ENCODE measurements at regions of chr21 and their contacts with region 1.

Region 1: DNA sequence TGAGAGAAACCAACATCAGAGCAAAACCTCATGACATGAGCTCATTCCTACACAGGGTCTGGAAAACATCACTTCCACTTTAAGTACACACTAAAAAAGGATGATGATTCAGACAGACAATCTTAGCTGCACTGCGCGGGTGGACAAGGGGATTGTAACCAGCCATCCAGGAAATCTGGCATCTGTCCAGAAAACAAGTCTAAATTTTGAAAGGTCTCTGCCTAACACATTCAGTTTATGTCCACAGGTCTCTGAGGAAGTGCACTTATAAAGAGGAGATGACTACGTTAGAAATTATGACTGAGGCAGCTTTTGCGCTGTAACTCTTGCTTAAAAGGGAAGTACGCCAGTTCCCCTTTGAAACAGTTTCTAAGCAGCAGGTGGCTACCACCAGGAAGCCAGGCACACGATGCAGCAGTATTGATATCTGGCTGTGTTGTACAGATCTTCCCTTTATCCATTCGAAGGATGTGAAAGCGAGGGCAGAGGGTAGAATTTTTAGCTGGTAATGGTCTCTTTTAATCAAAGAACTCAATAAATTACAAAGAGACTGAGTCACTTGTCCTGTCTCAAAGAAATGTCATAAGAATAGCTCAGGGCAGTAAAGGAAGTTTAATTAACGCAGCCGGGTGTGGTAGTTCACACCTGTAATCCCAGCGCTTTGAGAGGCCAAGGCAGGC is 128.0 kb downstream of the SETD4 start:
- DNase-seq: peak; percentile 59
- H3K4me3 Mint-ChIP-seq: no peak overlapping the region
- H3K27ac Mint-ChIP-seq: no peak overlapping the region
- H3K4me1 Mint-ChIP-seq: no peaks in the 10 kb centered on the region
- H3K27me3 Mint-ChIP-seq: no peaks in the 10 kb centered on the region

Region 2: GRCh38 chr21:35989138-35989735 is 56.9 kb after region 1 on chr21:
- CTCF ChIA-PET with region 1: no interaction called
- POLR2A ChIA-PET with region 1: no interaction called
- intact Hi-C with region 1: no loop called
- DNase-seq: no peak
- H3K4me3 Mint-ChIP-seq: no peak overlapping the region
- H3K27ac Mint-ChIP-seq: no peak overlapping the region
- H3K4me1 Mint-ChIP-seq: no peaks in the 10 kb centered on the region
- H3K27me3 Mint-ChIP-seq: peaks cover 13% of the 10 kb centered on the region

Region 3: DNA sequence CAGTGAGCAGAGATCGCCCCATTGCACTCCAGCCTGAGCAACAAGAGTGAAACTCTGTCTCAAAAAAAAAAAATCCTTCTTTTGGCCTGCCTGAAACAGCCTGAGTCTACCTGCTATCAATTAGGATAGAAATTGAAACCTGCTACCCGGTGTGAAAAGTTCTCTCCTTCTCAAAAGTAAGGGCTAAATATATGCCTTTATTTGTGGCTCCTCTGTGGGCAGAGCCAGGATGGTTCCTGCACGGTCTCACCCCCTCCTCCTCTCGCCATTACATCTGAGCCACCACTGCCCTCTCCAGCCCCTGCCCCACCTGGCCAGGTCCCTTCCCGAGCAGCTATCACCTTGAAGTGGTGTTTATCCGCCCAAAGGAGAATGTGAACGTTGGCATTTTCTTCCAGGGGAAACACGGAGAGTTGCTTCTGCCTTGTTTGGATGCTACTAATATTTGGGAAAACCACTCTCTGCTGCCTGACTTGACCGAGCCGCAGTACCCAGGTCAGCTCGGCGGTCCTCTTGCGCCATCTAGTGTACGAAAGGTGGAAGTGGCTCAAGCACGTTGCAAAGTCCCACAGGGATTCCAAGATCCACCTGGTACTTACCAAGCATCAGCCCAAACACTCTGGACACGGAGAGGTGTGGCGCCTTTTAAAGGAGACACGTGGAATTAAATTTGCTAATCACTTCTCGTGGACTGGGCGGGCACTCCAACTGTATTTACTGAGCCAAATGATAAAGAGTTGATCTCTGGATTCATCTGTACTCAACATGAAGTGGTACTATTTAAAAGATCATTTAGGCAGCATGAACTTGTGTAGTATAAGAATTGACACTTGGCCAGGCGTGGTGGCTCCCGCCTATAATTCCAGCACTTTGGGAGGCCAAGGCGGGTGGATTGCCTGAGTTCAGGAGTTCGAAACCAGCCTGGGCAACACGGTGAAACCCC is 96.0 kb after region 1 on chr21:
- CTCF ChIA-PET with region 1: no interaction called
- POLR2A ChIA-PET with region 1: no interaction called
- intact Hi-C with region 1: loop called (anchors 10 kb)
- DNase-seq: peak; percentile 77
- H3K4me3 Mint-ChIP-seq: no peak overlapping the region
- H3K27ac Mint-ChIP-seq: no peak overlapping the region
- H3K4me1 Mint-ChIP-seq: peaks cover 4% of the 10 kb centered on the region
- H3K27me3 Mint-ChIP-seq: no peaks in the 10 kb centered on the region

Measured in activated CD4-positive, alpha-beta memory T cell treated with anti-CD3 and anti-CD28 coated beads for 36 hours (primary cell).